Lower lobe of right lung (tissue), 2 donors: ENCODE measurements at regions of chr15 and their contacts with region 1.

Region 1: DNA sequence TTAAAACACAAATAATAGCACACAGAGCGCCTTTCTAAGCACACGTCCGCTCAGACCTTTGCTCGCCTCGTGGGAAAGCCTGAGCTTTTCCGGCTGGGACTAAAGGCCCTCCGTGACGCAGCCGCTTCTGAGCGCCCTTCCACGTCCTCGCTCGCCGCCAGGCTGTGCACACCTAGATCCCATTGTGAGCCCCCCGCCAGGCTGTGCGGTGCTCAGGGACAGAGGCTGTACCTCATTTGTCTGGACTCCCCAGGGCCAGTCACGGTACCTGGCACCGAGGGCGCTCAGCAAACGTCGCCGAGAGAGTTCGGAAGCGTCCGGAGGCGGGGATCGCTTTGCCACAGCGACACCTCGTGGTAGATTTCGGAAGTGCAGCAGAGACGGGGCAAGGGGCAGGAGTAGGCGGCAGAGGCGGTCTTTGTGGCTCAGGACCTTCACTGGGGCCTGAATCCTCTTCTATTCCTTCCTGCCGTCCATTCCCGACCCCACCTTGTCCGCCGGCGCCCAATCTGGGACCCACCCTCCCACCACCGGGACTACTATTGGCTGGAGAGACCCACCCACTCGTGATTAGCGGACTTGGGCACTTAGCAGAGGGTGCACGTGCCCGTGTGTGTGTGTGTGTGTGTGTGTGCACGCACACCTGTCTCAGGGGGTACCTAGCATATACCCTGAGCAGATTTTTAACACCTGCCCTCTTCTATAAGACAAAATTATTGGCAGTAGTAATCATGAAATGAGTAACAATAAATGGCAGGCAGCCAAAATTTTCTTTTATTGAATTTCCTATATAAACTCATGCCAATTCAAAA is 65.6 kb downstream of the RHCG start:
- DNase-seq: peak; percentile 87
- ATAC-seq: peak; percentile 93 to 95
- H3K4me3 ChIP-seq: peak overlapping the region; percentile 56
- H3K27ac ChIP-seq: no peak overlapping the region
- H3K4me1 ChIP-seq: peaks cover 11% of the 10 kb centered on the region
- H3K27me3 ChIP-seq: peaks cover 23% of the 10 kb centered on the region
- CTCF ChIP-seq: peak; percentile 99

Region 2: DNA sequence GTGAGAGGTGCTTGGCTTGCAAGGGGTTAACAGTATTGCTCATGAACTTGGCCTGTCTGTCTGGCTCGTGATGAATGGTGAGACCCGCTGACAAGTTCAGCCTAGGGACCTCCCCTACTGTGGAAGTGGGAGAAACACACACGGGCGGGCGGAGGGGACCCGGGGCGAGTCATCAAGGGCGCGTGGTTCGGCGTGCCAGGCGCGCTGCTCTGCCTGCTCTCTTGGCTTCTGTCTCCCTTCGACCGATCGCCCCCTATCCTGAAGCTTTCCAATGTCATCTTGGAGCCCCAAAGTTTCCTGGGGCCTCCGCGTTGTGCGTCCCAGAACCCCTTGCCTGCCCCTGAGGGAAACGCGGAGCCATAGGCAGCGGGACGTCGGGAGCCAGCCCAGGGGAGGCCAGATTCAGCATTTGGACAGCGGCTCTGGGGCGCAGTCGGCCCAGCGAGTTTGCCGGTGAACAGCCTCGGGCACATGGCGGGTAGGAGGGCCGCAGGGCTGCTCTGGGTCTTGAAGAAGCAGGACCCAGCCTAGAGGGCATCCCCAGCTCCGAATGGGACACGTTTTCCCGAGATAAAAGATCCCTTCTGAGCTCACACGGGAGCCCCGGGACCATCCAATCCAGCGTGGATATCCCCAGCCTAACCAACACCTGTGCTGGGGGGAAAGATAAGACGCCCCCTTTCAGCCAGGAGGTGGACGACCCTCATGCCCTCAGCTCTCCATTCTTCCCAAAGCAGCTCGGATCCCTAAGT is 69.1 kb before region 1 on chr15:
- intact Hi-C with region 1: loop called (anchors 10 kb)
- DNase-seq: peak; percentile 67
- ATAC-seq: peak; percentile 55 to 60
- H3K4me3 ChIP-seq: no peak overlapping the region
- H3K27ac ChIP-seq: no peak overlapping the region
- H3K4me1 ChIP-seq: peaks cover 22% of the 10 kb centered on the region
- H3K27me3 ChIP-seq: peaks cover 97% of the 10 kb centered on the region
- CTCF ChIP-seq: no peak

Region 3: DNA sequence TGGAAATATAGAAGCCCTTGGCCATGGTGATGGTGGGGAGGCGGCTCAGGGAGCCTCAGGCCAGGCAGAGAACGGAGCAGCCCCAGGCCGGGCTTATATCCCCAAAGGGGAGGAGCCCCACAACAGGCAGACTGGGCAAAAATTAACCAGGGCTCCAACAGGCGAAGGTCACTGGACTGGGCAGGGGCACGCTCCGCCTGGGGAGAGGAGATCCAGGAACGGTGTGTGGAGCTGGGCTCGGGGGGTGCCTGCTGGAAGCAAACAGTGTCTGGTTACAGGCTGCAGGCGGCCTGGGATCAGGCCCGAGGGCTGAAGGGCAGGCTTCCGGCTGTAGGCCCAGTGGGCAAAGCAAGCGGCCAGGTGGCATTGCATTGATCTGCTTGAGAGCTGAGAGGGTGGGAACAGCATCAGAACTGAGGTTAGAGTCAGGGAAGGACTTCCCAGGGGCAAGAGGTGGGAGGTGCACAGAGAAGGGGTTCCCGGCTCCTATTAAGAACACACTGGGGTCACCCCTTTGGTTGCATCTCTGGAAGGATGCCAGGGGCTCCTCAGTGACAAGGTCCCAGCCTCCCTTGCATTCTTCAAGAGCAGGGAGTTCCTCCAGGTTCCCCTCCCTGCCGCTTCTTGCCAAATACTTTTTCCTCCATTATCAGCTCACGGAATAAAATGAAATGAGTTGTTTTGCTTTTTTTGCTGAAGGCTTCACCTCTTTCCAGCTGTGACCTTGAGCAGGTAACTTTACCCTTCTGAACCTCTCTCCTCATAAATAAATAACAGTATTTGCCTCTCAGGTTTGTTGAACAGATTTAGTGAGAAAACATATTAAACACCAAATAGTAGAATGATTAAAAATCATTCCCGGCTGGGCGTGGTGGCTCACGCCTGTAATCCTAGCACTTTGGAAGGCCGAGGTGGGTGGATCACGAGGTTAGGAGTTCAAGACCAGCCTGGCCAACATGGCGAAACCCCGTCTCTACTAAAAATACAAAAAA is 376.1 kb after region 1 on chr15:
- intact Hi-C with region 1: no loop called
- DNase-seq: peak; percentile 14
- ATAC-seq: no peak
- H3K4me3 ChIP-seq: no peak overlapping the region
- H3K27ac ChIP-seq: no peak overlapping the region
- H3K4me1 ChIP-seq: peaks cover 4% of the 10 kb centered on the region
- H3K27me3 ChIP-seq: no peaks in the 10 kb centered on the region
- CTCF ChIP-seq: no peak